ENCODE measurements at regions of chr12 and their contacts with region 1.

Region 1: DNA sequence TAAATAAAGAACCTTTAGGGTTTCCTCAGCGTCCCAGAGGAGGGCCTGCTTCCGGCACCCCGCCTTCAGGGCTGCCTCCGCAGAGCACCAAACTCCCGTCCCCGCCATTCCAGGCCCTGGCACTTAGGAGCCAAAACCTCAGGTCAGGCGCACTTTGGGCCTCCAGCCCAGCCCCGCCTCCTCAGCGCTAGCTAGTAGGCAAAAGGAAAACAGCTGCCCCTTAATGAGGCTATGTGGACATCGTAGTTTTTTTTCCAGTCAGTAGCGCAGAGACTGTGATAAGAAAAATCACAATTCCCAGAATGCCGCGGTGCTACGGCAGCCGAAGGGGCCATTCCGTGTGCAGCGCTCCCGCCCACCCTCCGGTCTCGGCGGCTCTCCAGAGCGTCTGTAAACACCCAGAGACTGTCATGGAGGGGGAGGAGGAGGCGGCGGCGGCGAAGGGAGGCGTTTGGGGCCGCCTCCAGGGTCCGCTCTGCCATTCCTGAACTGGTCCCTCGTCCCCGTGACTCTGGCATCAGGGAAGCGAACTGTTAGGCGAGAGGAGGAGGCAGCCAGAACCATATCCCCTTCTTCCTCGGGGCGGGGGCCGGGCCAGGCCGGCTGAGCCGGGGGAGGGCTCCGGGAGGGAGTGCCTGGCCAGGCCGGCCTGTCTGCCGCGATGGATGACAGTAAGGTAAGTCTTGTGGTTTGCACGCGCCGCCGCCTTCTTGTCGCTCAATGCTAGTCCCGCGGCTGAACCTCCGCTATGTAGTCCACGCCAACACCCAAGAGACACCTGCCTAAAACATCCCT is at the start of gene CREBL2:
- DNase-seq: peak; percentile 97
- H3K4me3 ChIP-seq: peak within 1 kb of the TSS; percentile 54 to 85 (median 61)
- H3K27ac ChIP-seq: peak within 1 kb of the TSS; percentile 85 to 96 (median 90)
- H3K4me1 ChIP-seq: peaks cover 0 to 44% (median 36%) of the 10 kb centered on the region in 4 donors
- H3K27me3 ChIP-seq: no peaks in the 10 kb centered on the region
- CTCF ChIP-seq: no peak
- EP300 ChIP-seq: peak; percentile 27 to 85 (median 50)
- POLR2A ChIP-seq: peak; percentile 39 to 72
- total RNA-seq, gene CREBL2: 35.0 to 59.9 (median 46.5) TPM

Region 2: GRCh38 chr12:12696562-12697383 is 85.1 kb after region 1 on chr12:
- intact Hi-C with region 1: loop called (anchors 2 kb)
- DNase-seq: peak; percentile 94
- H3K4me3 ChIP-seq: peak overlapping the region; percentile 44 to 59 (median 54)
- H3K27ac ChIP-seq: peak overlapping the region; percentile 85 to 93 (median 88)
- H3K4me1 ChIP-seq: peaks cover 0 to 10% (median 0%) of the 10 kb centered on the region in 4 donors
- H3K27me3 ChIP-seq: no peaks in the 10 kb centered on the region
- CTCF ChIP-seq: no peak
- EP300 ChIP-seq: no peak
- POLR2A ChIP-seq: peak in 1 of 2 donors; percentile 77

Measured in sigmoid colon (tissue), 7 donors.